A549 (cell line): ENCODE measurements at regions of chr10 and their contacts with region 1.

Region 1: GRCh38 chr10:77391605-77392235 is 245.9 kb downstream of the KCNMA1 start:
- DNase-seq: peak; percentile 74 to 84
- ATAC-seq: peak; percentile 82 to 84
- H3K4me3 ChIP-seq: no peak overlapping the region
- H3K27ac ChIP-seq: peak overlapping the region; percentile 69 to 83
- H3K4me1 ChIP-seq: peaks cover 53% of the 10 kb centered on the region
- CTCF ChIP-seq: peak; percentile 73
- EP300 ChIP-seq: no peak; a peak in 1 of 5 replicates
- POLR2A ChIP-seq: no peak
- RAD21 ChIP-seq: peak; percentile 78 to 83

Region 2: DNA sequence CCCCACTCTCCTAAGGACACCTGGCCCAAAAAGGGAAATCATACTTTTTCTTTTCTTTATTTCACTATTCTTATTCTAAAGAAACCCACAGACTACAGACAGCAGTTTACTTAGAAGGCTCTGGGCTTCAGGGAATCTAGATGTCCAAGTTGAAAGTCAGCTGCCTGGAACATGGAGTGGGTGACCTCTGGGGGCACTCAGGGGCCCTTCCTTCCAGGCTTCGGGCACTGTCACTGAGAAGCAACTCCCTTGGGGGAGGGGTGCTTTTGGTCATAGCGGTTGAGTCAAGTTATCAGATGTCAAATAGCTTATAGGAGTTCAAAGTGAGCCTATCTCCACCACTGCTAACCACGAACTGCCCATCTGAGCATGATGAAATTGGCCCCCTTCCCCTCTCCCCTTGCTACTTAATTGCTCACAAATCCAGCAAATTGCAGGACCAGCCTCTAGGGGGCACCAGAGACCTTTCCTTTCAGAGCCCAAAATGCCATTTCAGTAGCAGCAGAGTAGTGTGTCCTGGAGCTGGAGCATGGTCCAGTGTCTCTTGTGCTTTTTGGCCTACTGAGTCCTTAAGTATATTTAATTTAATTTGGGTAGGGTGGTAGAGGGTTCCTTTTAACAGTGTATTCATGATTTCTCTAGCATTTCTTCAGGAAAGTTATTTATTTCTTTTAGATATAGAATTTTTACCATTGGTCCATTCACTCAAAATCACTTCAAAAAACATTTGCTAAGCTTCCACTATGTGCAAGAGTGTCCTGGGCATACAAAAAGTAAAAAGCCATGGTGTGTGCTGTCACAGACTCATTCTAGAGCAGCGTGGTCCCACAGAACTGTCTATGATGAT is 217.9 kb before region 1 on chr10:
- CTCF ChIA-PET with region 1: interaction called, 38 read pairs
- POLR2A ChIA-PET with region 1: no interaction called
- DNase-seq: peak; percentile 77 to 80
- ATAC-seq: peak; percentile 90 to 95
- H3K4me3 ChIP-seq: no peak overlapping the region
- H3K27ac ChIP-seq: peak overlapping the region in 1 of 2 experiments; percentile 52; a peak in 2 of 6 replicates
- H3K4me1 ChIP-seq: peaks cover 8% of the 10 kb centered on the region
- CTCF ChIP-seq: peak; percentile 97
- EP300 ChIP-seq: no peak
- POLR2A ChIP-seq: no peak
- RAD21 ChIP-seq: peak; percentile 96

Region 3: DNA sequence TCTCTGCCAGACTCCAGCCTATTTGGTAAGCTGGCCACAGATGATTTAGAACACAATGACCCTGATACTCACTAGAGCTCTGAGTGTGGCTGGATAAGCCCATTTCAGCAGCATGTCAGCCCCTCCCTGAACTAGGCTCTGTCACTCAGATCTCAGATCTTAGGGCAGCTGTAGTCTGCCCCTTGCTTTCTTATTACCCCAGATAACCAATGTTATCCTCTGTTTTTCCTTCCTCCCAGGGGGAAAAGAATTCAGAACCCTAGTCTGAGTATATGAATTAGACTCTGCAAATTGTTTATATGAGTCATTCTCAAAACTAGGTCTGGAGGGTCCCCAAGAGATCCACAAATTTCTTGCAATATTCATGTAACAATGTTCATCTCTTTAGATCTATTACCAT is 40.3 kb before region 1 on chr10:
- CTCF ChIA-PET with region 1: interaction called, 10 read pairs
- POLR2A ChIA-PET with region 1: no interaction called
- DNase-seq: peak in 1 of 2 experiments; percentile 16
- ATAC-seq: peak in 1 of 2 experiments; percentile 44; a peak in 2 of 6 replicates
- H3K4me3 ChIP-seq: no peak overlapping the region
- H3K27ac ChIP-seq: peak overlapping the region; percentile 75 to 90
- H3K4me1 ChIP-seq: peaks cover 54% of the 10 kb centered on the region
- CTCF ChIP-seq: no peak
- EP300 ChIP-seq: no peak
- POLR2A ChIP-seq: no peak
- RAD21 ChIP-seq: no peak

Region 4: GRCh38 chr10:77405771-77406241 is 14.1 kb after region 1 on chr10:
- CTCF ChIA-PET with region 1: interaction called, 33 read pairs
- POLR2A ChIA-PET with region 1: no interaction called
- DNase-seq: peak; percentile 78 to 89
- ATAC-seq: peak; percentile 86 to 88
- H3K4me3 ChIP-seq: no peak overlapping the region
- H3K27ac ChIP-seq: peak overlapping the region; percentile 65 to 88
- H3K4me1 ChIP-seq: peaks cover 18% of the 10 kb centered on the region
- CTCF ChIP-seq: no peak
- EP300 ChIP-seq: no peak
- POLR2A ChIP-seq: no peak
- RAD21 ChIP-seq: 0 out of 5 replicates have a peak, but pooled peaks of 1 of the 2 experiments have one; percentile 17

Region 5: GRCh38 chr10:77564731-77565589 is 173.2 kb after region 1 on chr10:
- CTCF ChIA-PET with region 1: no interaction called
- POLR2A ChIA-PET with region 1: no interaction called
- DNase-seq: peak; percentile 69 to 87
- ATAC-seq: peak; percentile 93 to 94
- H3K4me3 ChIP-seq: no peak overlapping the region
- H3K27ac ChIP-seq: peak overlapping the region; percentile 79 to 92
- H3K4me1 ChIP-seq: peaks cover 65% of the 10 kb centered on the region
- CTCF ChIP-seq: no peak
- EP300 ChIP-seq: peak in 1 of 2 experiments; percentile 72; a peak in 1 of 5 replicates
- POLR2A ChIP-seq: no peak
- RAD21 ChIP-seq: peak in 1 of 2 experiments; percentile 27; a peak in 1 of 5 replicates

Region 6: DNA sequence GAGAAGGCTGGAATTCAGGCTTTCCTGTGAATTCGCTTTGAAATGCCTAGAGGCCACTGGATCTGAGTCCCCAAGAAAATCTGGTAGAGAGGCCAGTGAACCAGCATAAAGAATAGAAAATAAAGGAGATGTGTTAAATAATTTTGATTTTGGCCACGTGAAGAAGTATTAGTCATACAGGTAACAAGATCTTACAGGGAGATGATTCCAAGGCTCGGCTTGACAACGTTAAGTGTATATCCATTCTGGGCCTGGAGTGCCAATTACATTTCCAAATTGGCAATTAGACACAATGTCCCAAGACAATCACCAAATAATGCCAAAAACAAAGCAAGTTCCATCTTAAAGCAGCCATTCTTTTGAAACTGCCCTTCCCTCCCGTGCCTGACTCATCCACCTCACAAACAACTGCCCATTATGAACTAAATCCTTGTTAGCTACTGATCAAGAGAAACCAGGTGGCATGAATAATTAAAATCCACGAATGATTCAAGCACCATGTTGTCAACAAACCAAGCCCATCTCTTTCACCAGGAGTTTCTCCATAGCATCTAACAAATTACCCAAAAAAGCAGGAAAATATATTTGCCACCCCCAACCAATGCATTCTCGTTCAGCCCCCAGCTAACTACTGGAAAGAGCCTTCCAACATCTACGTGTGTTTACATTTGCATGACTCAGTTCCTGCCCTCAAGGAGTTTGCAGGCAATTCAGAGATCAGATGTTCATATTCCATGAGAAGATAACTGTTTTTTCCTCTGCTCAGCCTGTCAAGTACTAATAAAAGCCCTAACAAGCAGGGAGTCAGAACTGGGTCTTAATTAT is 237.4 kb after region 1 on chr10:
- CTCF ChIA-PET with region 1: interaction called, 10 read pairs
- POLR2A ChIA-PET with region 1: no interaction called
- DNase-seq: peak in 1 of 2 experiments; percentile 65
- ATAC-seq: peak; percentile 66 to 71; a peak in 5 of 6 replicates
- H3K4me3 ChIP-seq: 0 out of 3 replicates have a peak overlapping the region, but pooled peaks have one; percentile 0
- H3K27ac ChIP-seq: peak overlapping the region; percentile 29 to 83; a peak in 5 of 6 replicates
- H3K4me1 ChIP-seq: peaks cover 31% of the 10 kb centered on the region
- CTCF ChIP-seq: no peak
- EP300 ChIP-seq: peak in 1 of 2 experiments; percentile 25; a peak in 1 of 5 replicates
- POLR2A ChIP-seq: no peak
- RAD21 ChIP-seq: no peak

Region 7: GRCh38 chr10:77710759-77711682 is 319.3 kb after region 1 on chr10:
- CTCF ChIA-PET with region 1: interaction called, 12 read pairs
- POLR2A ChIA-PET with region 1: no interaction called
- DNase-seq: peak; percentile 48 to 62
- ATAC-seq: peak; percentile 95 to 99
- H3K4me3 ChIP-seq: peak overlapping the region; percentile 31; the same call in 2 of the 3 replicates
- H3K27ac ChIP-seq: peak overlapping the region; percentile 40 to 79; a peak in 5 of 6 replicates
- H3K4me1 ChIP-seq: no peaks in the 10 kb centered on the region
- CTCF ChIP-seq: peak; percentile 86
- EP300 ChIP-seq: no peak
- POLR2A ChIP-seq: no peak
- RAD21 ChIP-seq: peak; percentile 82 to 84